ENCODE measurements at regions of chr18 and their contacts with region 1.

Region 1: GRCh38 chr18:26034850-26035497 is 55.4 kb downstream of the SS18 start:
- DNase-seq: no peak
- ATAC-seq: no peak
- H3K4me3 ChIP-seq: no peak overlapping the region
- H3K27ac ChIP-seq: no peak overlapping the region
- H3K4me1 ChIP-seq: no peaks in the 10 kb centered on the region
- H3K27me3 ChIP-seq: no peaks in the 10 kb centered on the region
- CTCF ChIP-seq: no peak

Region 2: DNA sequence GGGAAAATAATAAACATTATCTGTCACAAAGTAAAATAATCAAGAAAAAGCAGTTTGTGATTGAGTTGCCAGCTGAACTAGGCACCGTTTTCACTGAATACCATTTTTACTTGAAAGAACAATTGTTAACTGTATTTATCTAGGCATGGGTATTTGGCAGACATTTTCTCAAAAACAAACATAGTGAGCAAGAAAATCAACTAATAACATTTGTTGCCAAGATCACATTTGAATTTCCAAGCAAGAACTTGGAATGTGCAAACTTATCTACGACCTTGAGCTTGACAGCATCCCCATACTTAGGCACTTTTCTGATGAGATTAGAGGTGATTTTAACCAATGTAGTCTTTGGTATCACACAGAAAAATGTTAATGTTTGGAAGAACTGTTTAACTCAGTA is 38.8 kb after region 1 on chr18:
- CTCF ChIA-PET with region 1: no interaction called
- POLR2A ChIA-PET with region 1: no interaction called
- intact Hi-C with region 1: loop called (anchors 5 kb)
- DNase-seq: peak; percentile 64
- ATAC-seq: peak; percentile 94
- H3K4me3 ChIP-seq: no peak overlapping the region
- H3K27ac ChIP-seq: peak overlapping the region; percentile 73
- H3K4me1 ChIP-seq: peaks cover 12% of the 10 kb centered on the region
- H3K27me3 ChIP-seq: no peaks in the 10 kb centered on the region
- CTCF ChIP-seq: no peak